HEK293T (cell line): ENCODE measurements at regions of chr22 and their contacts with region 1.

Region 1: DNA sequence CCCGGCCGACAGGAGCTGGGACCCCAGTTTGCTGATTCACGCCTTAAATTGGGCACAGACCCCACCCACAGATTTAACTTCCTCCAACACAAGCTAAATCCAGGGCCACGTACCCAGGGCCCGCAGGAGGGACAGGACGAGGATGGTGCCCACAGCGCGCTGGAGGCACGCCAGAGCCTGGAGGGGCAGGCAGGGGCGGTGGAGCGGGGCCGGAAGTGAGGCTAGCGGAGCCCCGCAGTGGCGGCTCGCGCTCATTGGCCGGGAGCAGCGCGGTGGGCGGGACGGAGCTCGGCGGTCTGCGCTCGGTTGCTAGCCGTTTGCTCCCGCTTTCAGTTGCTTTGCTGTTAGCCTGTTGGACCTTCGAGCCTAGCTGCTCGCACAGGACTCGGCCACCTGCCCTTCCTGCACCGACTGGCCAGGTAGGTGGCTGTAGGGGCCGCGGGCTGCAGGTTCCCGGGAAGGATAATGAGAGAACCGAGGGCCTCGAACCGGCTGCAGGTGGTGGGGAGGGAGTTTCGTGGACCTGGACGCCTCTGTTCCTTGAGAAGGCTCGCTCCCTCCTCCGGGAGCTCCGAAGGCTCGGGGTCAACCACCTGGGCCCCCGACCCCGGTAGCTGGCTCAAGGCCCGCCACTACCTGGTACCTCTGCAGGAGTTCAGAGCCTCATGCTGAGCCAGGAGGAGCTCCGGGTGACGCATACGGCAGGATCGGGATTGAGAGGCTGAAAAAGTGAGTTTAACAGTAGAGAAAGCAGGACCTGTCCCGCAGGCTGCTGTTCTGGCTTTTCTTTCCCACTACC is at the start of gene CCDC134:
- DNase-seq: peak; percentile 97

Region 2: GRCh38 chr22:41746567-41747400 is 53.8 kb before region 1 on chr22:
- CTCF ChIA-PET with region 1: interaction called, 4 read pairs
- POLR2A ChIA-PET with region 1: interaction called, 13 read pairs
- DNase-seq: peak; percentile 81

Region 3: DNA sequence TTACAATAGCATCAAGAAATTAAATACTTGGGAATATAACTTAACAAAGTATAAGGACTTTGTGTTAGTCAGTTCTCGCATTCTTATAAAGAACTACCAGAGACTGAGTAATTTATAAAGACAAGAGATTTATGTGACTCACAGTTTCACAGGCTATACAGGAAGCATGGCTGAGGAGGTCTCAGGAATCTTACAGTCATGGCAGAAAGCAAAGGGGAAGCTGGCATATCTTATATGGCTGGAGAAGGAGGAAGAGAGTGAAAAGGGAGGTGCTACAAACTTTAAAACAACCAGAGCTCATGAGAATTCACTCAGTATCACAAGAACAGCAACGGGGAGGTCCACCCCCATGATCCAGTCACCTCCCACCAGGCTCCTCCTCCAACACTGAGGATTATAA is 32.1 kb before region 1 on chr22:
- CTCF ChIA-PET with region 1: no interaction called
- POLR2A ChIA-PET with region 1: interaction called, 18 read pairs
- DNase-seq: no peak

Region 4: DNA sequence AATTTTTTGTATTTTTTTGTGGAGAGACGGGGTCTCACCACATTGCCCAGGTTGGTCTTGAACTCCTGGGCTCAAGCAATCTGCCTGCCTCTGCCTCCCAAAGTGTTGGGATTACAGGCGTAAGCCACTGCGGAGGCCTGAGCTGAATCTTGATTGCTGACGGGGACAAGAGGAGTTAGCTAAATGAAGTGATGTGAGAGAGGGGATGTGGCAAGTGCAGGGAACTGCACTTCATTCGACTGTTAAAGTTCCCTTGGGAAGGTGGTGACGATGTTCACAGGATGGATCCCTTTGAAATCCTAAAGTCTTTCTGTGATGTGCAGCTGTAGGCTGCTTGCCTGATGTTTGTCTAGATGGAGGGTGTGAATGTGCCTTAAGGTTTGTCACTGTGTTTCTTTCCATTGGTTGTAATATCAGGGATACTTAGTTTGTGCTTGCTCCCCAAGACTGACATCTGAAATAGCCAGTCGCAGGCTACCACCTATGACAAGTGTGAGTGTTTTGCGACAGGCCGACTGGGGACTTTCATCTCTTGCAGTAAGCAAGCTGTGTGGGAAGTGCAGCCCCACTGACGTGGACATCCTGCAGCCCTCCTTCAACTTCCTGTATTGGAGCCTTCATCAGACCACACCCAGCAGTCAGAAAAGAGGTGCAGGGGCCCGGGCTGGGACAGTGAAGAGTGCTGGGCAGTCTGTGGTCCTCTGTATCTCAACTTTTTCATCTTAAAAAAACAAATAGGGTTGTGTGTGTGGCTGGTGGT is 19.6 kb before region 1 on chr22:
- CTCF ChIA-PET with region 1: no interaction called
- POLR2A ChIA-PET with region 1: interaction called, 31 read pairs
- DNase-seq: no peak

Region 5: GRCh38 chr22:41813726-41814410 is 13.3 kb after region 1 on chr22:
- CTCF ChIA-PET with region 1: no interaction called
- POLR2A ChIA-PET with region 1: interaction called, 30 read pairs
- DNase-seq: no peak

Region 6: DNA sequence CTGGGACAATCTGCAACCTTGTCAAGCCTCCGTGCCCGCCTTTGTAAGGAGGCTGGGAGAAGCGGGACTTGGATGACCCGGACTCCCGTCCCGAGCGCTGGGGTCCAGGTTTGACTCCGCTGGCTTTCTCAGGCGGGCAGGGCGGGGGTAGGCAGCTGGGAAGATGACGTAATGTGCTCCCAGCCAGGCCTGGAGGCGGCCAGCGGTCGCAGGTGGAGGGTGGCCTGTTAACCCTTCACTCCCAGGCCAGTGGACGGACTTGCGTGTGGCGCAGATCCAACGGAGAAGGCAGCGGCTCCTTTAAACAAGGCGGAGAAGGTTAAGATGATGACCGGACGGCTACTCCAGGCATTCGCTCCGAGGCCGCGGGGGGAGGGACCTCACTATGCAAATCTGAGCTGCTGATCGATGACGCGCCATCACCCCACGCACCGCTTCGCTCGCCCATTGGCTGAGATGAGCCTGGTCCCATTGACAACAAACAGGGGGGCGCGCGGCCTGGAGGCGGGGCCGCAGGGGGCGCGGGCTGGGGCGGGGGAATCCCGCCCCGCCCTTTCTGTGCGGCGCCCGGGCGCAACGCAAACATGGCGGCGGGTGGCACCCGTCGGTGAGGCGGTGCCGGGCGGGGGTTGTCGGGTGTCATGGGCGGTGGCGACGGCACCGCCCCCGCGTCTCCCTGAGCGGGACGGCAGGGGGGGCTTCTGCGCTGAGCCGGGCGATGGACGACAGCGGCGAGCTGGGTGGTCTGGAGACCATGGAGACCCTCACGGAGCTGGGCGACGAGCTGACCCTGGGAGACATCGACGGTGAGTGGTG is 32.2 kb after region 1 on chr22 and contains the start of gene SREBF2:
- CTCF ChIA-PET with region 1: no interaction called
- POLR2A ChIA-PET with region 1: interaction called, 35 read pairs
- DNase-seq: peak; percentile 96

Region 7: DNA sequence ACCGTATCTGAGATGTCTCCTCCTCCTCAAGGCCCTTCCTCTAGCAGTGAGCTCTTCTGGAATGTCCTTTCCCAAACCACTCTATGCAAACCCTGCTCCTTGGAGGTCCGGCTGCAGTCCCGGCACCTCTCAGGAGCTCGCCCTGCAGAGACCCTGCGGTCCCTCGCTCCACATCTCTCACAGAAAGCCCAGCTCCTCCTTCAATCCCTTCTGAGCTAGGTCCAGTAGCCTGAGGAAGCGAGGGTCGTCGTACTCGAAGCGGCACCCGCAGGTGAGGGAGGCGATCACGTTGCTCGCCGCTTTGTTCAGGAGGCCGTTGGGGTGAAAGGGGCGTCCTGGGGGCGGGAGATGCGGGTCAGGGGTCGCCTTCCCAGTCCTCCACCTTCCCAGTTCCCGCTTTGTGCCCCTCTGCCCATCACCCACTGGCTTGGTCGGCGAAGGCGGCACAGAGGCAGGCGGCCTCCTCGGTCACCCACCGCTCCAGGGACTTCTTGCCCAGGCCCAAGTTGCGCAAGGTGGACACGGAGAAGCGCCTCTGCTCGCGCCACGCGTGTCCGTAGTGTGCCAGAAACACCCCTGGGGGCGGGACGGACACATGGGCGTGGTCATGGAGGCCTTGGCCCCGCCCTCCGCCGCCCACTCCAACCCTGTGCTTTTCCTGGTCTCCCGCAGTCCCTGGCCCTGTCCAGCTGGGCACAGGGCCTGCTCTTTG is 351.5 kb after region 1 on chr22:
- CTCF ChIA-PET with region 1: no interaction called
- POLR2A ChIA-PET with region 1: no interaction called
- DNase-seq: no peak